ENCODE measurements at regions of chr10 and their contacts with region 1.

Region 1: DNA sequence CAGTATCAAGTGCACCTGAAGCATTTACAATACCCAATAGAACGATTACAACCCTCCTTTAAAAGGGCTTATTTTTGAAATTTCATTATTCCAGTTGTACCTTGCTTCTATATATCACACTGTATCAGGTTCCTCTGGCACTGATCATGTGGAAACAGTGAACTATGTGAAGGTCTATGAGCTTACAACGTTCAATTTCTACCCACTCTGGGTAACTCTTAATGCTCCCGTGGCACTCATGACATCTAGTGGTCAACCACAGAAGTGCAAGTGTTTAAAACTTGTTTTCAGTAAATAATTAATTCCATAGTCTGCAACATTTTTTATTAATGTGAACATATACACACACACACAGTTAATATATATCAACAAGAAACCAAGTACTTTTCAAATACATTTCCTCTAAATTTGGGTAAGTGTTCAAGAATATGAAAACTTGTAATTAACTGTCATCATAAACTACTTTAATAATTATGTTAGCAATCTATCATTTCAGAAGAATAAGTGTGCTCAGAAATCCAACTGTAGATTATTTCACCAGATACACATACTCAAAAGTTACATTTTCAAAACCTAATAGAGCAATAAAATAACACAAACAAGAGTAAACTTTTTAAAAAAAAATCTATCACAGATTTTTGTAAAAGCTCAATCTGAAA is 61.0 kb downstream of the MPP7 start:
- DNase-seq: no peak
- ATAC-seq: peak; percentile 85
- H3K4me3 ChIP-seq: no peak overlapping the region
- H3K27ac ChIP-seq: no peak overlapping the region
- H3K4me1 ChIP-seq: no peaks in the 10 kb centered on the region
- H3K27me3 ChIP-seq: no peaks in the 10 kb centered on the region

Region 2: DNA sequence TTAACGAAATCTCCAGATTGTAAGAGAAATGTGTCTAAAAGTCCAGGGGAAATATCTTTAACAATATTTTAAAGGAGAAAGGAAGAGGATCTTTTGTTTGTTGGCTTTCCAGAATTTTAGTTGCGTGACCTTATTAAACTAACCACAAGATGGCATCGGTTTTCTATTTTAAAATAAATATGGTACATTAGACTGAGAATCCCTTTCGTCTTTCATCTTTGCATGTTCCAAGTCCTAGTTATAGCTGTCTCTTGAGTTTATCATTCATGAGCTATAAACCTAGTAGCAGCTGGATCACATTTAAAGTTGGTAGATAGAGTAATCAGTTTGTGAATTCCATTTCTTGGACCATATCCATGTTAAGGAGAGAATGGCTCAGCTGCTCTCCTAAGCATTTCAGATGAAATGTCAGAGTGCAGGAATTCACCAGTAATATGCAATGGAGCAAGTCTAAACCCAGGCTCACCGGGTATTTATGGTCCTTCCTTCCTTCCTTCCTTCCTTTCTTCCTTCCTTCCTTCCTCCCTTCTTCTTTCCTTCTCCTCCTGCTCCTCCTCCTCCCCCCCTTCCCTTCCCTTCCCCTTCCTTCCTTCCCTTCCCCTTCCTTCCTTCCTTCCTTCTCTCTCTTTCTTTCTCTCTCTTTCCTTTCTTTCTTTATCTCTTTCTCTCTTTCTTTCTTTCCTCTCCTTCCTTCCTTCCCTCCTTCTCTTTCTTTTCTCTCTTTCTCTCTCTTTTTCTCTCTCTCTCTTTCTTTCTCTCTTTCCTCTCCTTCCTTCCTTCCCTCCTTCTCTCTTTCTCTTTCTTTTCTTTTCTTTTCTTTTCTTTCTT is 795.6 kb before region 1 on chr10:
- intact Hi-C with region 1: loop called in 1 of 2 experiments (anchors 10 kb)
- DNase-seq: no peak
- ATAC-seq: no peak
- H3K4me3 ChIP-seq: no peak overlapping the region
- H3K27ac ChIP-seq: no peak overlapping the region
- H3K4me1 ChIP-seq: no peaks in the 10 kb centered on the region
- H3K27me3 ChIP-seq: no peaks in the 10 kb centered on the region

Region 3: GRCh38 chr10:27558612-27559020 is 683.3 kb before region 1 on chr10:
- intact Hi-C with region 1: loop called (anchors 10 kb)
- DNase-seq: peak in 1 of 2 donors; percentile 55
- ATAC-seq: no peak
- H3K4me3 ChIP-seq: no peak overlapping the region
- H3K27ac ChIP-seq: no peak overlapping the region
- H3K4me1 ChIP-seq: no peaks in the 10 kb centered on the region
- H3K27me3 ChIP-seq: no peaks in the 10 kb centered on the region

Region 4: DNA sequence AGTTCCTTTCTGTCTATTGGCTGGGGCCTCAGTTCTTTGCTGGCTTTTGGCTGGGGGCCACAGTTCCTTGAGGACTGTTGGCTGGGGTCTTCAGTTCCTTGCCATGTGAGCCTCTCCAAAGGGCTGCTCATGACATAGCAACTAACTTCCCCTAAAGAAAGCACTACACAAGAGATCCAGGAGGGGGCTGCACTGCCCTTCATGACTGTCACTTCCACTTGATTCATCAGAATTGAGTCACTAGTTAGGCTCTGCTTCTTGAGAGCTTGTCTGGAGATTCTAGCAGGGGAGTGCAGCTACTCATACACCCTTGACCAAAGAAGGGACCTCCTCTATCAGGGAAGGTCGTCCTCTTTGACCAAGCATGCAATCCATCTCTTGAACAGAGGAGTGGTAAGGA is 458.2 kb before region 1 on chr10:
- intact Hi-C with region 1: loop called in 1 of 2 experiments (anchors 2 kb)
- DNase-seq: no peak
- ATAC-seq: peak; percentile 15
- H3K4me3 ChIP-seq: no peak overlapping the region
- H3K27ac ChIP-seq: no peak overlapping the region
- H3K4me1 ChIP-seq: peaks cover 3% of the 10 kb centered on the region in 2 donors
- H3K27me3 ChIP-seq: no peaks in the 10 kb centered on the region

Region 5: DNA sequence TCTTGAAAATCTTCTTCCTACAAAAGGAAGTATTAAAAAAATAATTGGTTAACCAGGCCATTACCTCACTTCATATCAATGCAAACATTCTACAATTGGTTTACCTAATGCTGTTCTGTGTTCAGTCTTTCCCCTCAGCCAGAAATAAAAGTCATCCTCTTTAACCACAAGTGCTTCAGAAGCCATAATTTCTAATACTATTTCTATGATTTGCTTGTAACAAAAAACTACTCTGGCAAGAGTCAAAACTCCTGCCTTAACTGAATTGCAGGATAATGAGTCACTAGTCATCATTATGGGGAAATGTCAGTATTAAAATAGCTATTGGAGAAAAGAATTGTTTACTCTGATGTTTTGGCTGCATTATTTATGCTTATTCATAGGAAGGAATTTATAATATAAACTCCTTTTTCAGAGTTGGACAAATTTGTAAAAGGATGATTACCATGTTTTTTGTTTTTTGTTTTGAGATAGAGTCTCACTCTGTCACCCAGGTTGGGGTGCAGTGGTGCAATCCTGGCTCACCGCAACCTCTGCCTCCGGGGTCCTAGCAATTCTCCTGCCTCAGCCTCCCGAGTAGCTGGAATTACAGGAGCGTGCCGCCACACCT is 187.5 kb before region 1 on chr10:
- intact Hi-C with region 1: no loop called
- DNase-seq: no peak
- ATAC-seq: peak; percentile 64
- H3K4me3 ChIP-seq: no peak overlapping the region
- H3K27ac ChIP-seq: peak overlapping the region in 1 of 2 donors; percentile 50
- H3K4me1 ChIP-seq: peaks cover 0 to 2% of the 10 kb centered on the region in 2 donors
- H3K27me3 ChIP-seq: no peaks in the 10 kb centered on the region

Region 6: DNA sequence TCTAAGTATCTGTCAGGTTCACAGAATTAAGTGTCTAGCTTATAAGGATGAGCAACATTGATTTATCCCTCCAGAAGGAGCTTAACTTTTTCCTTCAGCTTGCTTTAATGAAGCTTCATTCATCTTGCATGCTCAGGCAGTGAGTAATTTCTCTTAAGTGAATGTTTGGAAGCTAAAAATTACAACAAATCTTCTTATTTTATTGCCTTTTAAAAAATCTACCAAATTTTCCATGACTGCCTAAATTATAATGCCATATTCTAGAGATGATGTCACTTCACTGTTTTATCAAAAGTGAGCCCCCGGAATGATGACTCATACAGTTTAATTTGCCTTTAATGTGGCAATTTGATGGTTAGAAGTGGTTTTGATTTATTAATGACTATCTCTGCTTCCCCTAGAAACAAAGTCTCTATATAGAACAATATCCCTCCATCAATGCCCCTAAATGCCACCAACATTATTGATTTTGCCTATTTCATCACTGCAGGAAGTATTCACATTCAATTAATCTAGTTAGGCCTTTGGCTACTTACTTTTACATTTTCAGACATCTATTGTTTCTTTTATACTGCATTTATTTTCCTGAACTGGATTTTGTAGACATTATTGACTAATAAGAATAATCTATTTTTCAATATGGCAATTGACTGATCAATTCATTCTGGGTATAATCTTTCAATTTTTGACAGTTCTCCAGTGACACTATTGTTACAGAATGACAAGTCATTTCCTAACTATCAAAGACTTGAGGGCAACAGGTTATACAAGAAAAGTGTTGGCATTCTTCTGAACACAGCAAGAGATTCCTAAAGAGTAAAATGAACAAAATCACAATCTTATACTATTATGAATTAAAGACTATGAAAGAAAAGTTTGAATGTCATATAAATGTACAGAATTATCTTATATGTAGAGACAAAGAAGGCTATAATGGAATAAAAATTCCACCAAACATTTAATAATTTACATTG is 103.7 kb before region 1 on chr10:
- intact Hi-C with region 1: no loop called
- DNase-seq: no peak
- ATAC-seq: no peak
- H3K4me3 ChIP-seq: no peak overlapping the region
- H3K27ac ChIP-seq: no peak overlapping the region
- H3K4me1 ChIP-seq: peaks cover 0 to 2% of the 10 kb centered on the region in 2 donors
- H3K27me3 ChIP-seq: no peaks in the 10 kb centered on the region